GM12878 (cell line): ENCODE measurements at regions of chr2 and their contacts with region 1.

Region 1: GRCh38 chr2:48107326-48107925 is 201.1 kb upstream of the FBXO11 start:
- DNase-seq: no peak
- ATAC-seq: no peak
- H3K4me3 ChIP-seq: no peak overlapping the region
- H3K27ac ChIP-seq: no peak overlapping the region
- H3K4me1 ChIP-seq: peaks cover 8% of the 10 kb centered on the region
- H3K27me3 ChIP-seq: no peaks in the 10 kb centered on the region
- CTCF ChIP-seq: no peak
- EP300 ChIP-seq: no peak
- POLR2A ChIP-seq: no peak
- RAD21 ChIP-seq: no peak

Region 2: GRCh38 chr2:47782671-47783485 is 324.5 kb before region 1 on chr2 and contains the start of gene MSH6:
- CTCF ChIA-PET with region 1: interaction called, 6 read pairs
- POLR2A ChIA-PET with region 1: no interaction called
- RAD21 ChIA-PET with region 1: interaction called, 6 read pairs
- SMC1A ChIA-PET with region 1: no interaction called
- in situ Hi-C with region 1: no loop called
- intact Hi-C with region 1: loop called (anchors 5 kb)
- DNase-seq: peak; percentile 39
- ATAC-seq: peak; percentile 89
- H3K4me3 ChIP-seq: peak within 1 kb of the TSS; percentile 73
- H3K27ac ChIP-seq: peak within 1 kb of the TSS; percentile 80
- H3K4me1 ChIP-seq: 0 out of 2 replicates have a peak, but pooled peaks cover 8% of the 10 kb centered on the region
- H3K27me3 ChIP-seq: no peaks in the 10 kb centered on the region
- CTCF ChIP-seq: no peak
- EP300 ChIP-seq: no peak
- POLR2A ChIP-seq: peak; percentile 92
- RAD21 ChIP-seq: no peak
- polyA plus RNA-seq, gene MSH6: 12.4 to 25.6 TPM

Region 3: DNA sequence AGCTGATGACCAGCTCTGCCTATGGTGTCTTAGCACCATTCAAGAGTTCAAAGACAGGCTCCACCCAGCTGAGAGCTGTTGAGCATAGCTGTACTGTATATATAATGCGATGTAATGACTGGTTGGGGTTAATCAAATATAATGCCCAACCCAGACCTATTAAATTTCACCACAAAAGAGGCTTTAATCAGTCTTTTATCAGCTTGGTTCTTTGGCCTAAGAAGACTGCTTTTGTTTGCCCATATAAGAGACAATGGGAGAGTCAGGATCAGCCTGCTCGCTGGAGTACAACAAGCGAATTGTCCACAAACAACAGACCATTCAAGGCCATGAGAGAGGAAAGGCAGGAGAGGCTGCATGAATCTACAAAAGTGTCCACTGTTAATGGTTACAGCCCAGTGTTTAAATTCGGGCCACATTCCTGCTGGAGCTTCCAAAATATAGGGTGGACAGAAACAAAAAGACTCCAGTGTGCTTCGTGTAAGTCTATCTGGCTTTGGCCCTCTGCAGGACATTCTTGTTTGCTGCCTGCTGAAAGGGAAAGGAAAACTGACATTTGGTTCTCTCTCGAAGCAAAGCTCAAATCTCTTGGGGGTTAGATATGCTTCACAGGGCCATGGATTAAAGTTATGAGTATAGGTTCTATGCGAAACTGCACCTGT is 97.8 kb after region 1 on chr2:
- CTCF ChIA-PET with region 1: no interaction called
- POLR2A ChIA-PET with region 1: no interaction called
- RAD21 ChIA-PET with region 1: no interaction called
- SMC1A ChIA-PET with region 1: no interaction called
- in situ Hi-C with region 1: no loop called
- intact Hi-C with region 1: no loop called
- DNase-seq: peak; percentile 48
- ATAC-seq: peak; percentile 85
- H3K4me3 ChIP-seq: no peak overlapping the region
- H3K27ac ChIP-seq: no peak overlapping the region
- H3K4me1 ChIP-seq: peaks cover 3% of the 10 kb centered on the region; the same call in 1 of the 2 replicates
- H3K27me3 ChIP-seq: no peaks in the 10 kb centered on the region
- CTCF ChIP-seq: peak in 2 of 3 experiments; percentile 33 to 52; a peak in 2 of 6 replicates
- EP300 ChIP-seq: no peak
- POLR2A ChIP-seq: no peak
- RAD21 ChIP-seq: peak; percentile 17; the same call in 1 of the 2 replicates

Region 4: GRCh38 chr2:48414980-48415835 is 307.8 kb after region 1 on chr2:
- CTCF ChIA-PET with region 1: interaction called, 25 read pairs
- POLR2A ChIA-PET with region 1: no interaction called
- RAD21 ChIA-PET with region 1: interaction called, 17 read pairs
- SMC1A ChIA-PET with region 1: interaction called, 19 read pairs
- in situ Hi-C with region 1: no loop called
- intact Hi-C with region 1: no loop called
- DNase-seq: no peak
- ATAC-seq: peak; percentile 55
- H3K4me3 ChIP-seq: no peak overlapping the region
- H3K27ac ChIP-seq: no peak overlapping the region
- H3K4me1 ChIP-seq: peaks cover 17% of the 10 kb centered on the region
- H3K27me3 ChIP-seq: no peaks in the 10 kb centered on the region
- CTCF ChIP-seq: no peak
- EP300 ChIP-seq: no peak
- POLR2A ChIP-seq: no peak
- RAD21 ChIP-seq: no peak